Activated naive CD4-positive, alpha-beta T cell treated with anti-CD3 and anti-CD28 coated beads for 36 hours (primary cell): ENCODE measurements at regions of chrX and their contacts with region 1.

Region 1: DNA sequence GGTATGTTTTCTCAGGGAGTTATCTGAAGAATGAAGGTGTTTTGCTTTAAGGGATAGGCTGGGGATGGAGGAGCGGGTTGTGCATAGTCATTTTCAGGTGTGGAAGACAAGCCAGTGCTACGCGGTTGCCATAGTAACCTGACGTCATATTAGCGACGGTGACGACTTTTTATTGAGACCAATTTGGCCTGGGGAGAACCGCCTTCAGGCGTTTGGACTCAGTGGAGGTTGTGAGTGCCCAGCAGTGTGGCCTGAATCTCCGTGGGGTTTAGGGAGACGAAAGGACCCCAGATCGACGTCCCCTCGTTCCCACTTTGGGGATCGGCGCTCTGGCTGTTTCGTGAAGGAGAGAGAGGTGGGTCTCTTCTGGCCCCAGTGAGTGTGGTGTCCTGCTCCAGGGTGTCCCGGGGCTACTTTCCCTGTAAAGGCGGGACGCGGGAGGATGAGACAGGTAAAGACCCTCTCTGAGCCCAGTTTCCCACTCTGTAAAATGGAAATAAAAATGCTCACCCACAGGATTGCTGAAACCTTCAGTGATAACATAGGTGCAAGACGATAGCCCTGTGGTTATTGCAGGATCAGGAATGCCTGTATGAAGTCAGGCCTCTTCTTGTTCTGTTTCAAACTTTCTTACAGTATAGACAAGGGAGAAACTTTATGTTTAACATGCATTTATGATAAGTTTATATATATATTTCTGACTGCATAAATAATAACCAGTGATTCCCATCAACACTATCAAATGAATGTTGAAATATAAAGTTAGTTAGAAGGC is 48.6 kb downstream of the GPRASP3 start:
- DNase-seq: peak; percentile 87
- H3K4me3 Mint-ChIP-seq: peak overlapping the region; percentile 96
- H3K27ac Mint-ChIP-seq: peak overlapping the region; percentile 86
- H3K4me1 Mint-ChIP-seq: peaks cover 8% of the 10 kb centered on the region
- H3K27me3 Mint-ChIP-seq: no peaks in the 10 kb centered on the region

Region 2: DNA sequence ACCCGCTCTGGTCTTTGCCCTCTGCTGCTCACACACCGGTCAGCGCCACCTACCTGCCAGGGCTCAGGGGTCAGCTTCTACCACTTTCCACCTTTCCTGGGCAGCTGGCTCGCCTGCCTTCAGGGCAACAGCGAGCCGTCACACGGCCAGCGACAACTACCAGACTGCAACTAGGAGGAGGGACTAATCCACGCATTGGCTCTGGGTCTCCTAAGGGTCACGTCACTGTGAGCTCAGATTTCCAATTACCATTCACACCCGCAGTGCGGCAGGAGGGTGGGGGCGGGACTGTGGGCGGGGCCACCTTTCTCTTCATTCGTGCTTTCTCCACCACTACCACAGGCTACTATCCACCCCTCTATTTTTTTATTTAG is 613.4 kb before region 1 on chrX and contains the start of gene BEX5:
- CTCF ChIA-PET with region 1: no interaction called
- intact Hi-C with region 1: loop called (anchors 1 kb)
- DNase-seq: peak; percentile 73
- H3K4me3 Mint-ChIP-seq: peak within 1 kb of the TSS; percentile 98
- H3K27ac Mint-ChIP-seq: peak within 1 kb of the TSS; percentile 84
- H3K4me1 Mint-ChIP-seq: peaks cover 11% of the 10 kb centered on the region
- H3K27me3 Mint-ChIP-seq: peaks cover 3% of the 10 kb centered on the region
- total RNA-seq, gene BEX5: 6.6 to 7.2 TPM

Region 3: GRCh38 chrX:102720237-102721168 is 48.7 kb before region 1 on chrX and contains the start of gene GPRASP3:
- CTCF ChIA-PET with region 1: no interaction called
- intact Hi-C with region 1: loop called (anchors 5 kb)
- DNase-seq: peak; percentile 86
- H3K4me3 Mint-ChIP-seq: peak within 1 kb of the TSS; percentile 91
- H3K27ac Mint-ChIP-seq: peak within 1 kb of the TSS; percentile 54
- H3K4me1 Mint-ChIP-seq: peaks cover 8% of the 10 kb centered on the region
- H3K27me3 Mint-ChIP-seq: no peaks in the 10 kb centered on the region
- total RNA-seq, gene GPRASP3: 1.5 to 1.7 TPM

Region 4: DNA sequence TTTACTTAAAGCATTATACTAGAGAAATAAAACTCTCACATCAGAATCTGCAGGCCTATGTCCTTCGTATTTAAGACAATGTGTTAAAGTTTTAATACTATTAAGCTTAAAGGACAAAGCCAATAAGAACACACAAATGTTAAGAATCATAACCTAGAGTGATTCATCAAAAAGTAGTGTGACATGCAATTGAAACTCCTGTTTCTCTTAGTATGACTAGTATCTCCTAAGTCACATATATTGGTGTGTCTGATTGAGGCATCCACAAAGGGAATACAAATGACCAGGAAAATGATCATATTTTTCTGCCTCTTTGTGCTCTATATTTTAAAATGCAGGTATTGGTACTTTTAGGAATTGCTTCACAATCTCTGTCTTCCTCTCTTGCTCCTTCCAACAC is 24.9 kb before region 1 on chrX:
- CTCF ChIA-PET with region 1: no interaction called
- intact Hi-C with region 1: loop called (anchors 1 kb)
- DNase-seq: no peak
- H3K4me3 Mint-ChIP-seq: no peak overlapping the region
- H3K27ac Mint-ChIP-seq: no peak overlapping the region
- H3K4me1 Mint-ChIP-seq: peaks cover 8% of the 10 kb centered on the region
- H3K27me3 Mint-ChIP-seq: no peaks in the 10 kb centered on the region